ENCODE measurements at regions of chr11 and their contacts with region 1.

Region 1: GRCh38 chr11:62726915-62727763 is at the start of gene HNRNPUL2:
- H3K4me3 Mint-ChIP-seq: peak within 1 kb of the TSS; percentile 95
- H3K27ac Mint-ChIP-seq: peak within 1 kb of the TSS; percentile 97
- H3K4me1 Mint-ChIP-seq: peaks cover 46% of the 10 kb centered on the region
- H3K27me3 Mint-ChIP-seq: no peaks in the 10 kb centered on the region

Region 2: DNA sequence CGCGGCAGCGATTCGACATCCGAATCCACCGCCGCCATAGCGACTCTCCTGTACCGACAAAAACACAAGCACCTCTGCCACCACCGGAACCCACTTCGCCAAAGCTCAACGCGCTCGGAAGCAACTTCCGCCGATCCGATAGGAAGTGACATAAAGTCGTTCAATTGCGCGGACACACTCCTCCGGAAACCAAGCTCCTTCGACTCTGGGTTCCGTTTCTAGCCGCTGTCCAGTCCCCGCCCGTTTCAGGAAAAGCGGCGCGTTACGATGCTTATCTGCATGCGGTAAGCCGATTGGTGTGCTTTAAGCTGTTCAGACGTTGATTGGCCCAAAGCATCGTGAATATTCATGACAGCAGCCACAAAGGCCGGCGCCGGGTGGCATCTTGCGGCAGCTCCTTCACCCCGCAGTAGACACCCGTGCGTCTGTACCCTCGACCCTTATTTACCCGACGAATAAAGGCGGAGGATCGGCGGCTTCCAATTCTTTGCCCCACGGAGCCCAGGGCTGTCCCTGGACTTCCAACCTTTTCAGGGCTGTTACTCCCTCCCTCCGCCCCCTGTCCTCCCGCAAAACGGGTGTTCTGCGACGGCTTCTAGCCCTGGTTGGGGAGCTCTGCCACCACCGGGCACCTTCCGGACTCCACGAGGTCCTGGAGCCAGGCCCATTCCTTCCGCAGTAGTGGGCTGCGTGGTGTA is 135.5 kb before region 1 on chr11 and contains the start of gene TUT1:
- intact Hi-C with region 1: no loop called
- H3K4me3 Mint-ChIP-seq: peak within 1 kb of the TSS; percentile 91
- H3K27ac Mint-ChIP-seq: peak within 1 kb of the TSS; percentile 97
- H3K4me1 Mint-ChIP-seq: peaks cover 39% of the 10 kb centered on the region
- H3K27me3 Mint-ChIP-seq: no peaks in the 10 kb centered on the region

Region 3: GRCh38 chr11:62664405-62665074 is 62.6 kb before region 1 on chr11:
- intact Hi-C with region 1: no loop called
- H3K4me3 Mint-ChIP-seq: peak overlapping the region; percentile 94
- H3K27ac Mint-ChIP-seq: peak overlapping the region; percentile 88
- H3K4me1 Mint-ChIP-seq: peaks cover 29% of the 10 kb centered on the region
- H3K27me3 Mint-ChIP-seq: no peaks in the 10 kb centered on the region

Region 4: DNA sequence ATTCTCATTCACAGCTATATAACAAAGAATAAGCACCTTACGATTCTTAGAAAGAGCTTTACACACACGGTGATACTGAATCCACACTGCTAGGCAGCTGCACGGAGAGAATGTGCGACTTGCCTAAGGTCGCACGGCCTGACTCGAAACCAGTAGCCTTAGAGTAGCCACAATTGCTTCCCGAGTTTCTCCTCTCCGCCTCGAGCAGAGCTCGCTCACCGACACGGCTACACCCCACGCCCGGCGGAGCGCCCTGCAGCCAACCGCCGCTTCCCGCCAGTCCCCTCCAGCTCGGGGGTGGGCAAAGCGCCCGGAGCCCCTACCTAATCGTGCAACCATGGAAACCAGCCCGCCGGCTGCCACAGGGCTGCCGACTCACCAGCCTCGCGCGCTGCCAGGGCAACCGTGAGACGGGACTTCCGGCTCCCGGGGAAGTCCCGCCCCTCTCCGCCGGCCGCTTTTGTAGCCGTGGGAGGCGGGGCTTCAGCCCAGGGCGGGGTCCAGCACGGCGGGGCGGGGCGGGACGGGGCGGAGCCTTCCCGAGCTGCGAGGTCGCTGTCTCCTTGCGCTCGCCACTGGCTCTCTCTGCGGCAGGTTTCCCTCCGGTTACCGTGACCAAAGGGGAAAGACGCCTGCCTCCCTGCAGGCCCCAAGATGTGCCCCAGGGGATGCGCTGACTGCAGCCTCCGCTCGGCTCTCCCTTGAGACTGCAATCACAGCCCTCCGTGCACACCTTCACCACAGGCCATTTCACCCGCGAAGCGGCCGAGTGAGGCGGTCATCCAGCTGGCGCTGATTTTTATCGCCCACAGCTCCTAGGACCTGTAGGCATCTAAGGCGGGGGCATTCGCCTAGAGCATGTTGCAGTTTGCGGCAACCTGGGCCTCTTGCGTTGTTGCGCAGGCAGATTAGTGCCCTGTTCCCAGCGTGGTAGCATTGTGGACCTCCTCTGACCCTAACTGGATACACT is 21.0 kb before region 1 on chr11:
- intact Hi-C with region 1: loop called (anchors 1 kb)
- H3K4me3 Mint-ChIP-seq: peak overlapping the region; percentile 94
- H3K27ac Mint-ChIP-seq: peak overlapping the region; percentile 92
- H3K4me1 Mint-ChIP-seq: peaks cover 77% of the 10 kb centered on the region
- H3K27me3 Mint-ChIP-seq: no peaks in the 10 kb centered on the region

Region 5: DNA sequence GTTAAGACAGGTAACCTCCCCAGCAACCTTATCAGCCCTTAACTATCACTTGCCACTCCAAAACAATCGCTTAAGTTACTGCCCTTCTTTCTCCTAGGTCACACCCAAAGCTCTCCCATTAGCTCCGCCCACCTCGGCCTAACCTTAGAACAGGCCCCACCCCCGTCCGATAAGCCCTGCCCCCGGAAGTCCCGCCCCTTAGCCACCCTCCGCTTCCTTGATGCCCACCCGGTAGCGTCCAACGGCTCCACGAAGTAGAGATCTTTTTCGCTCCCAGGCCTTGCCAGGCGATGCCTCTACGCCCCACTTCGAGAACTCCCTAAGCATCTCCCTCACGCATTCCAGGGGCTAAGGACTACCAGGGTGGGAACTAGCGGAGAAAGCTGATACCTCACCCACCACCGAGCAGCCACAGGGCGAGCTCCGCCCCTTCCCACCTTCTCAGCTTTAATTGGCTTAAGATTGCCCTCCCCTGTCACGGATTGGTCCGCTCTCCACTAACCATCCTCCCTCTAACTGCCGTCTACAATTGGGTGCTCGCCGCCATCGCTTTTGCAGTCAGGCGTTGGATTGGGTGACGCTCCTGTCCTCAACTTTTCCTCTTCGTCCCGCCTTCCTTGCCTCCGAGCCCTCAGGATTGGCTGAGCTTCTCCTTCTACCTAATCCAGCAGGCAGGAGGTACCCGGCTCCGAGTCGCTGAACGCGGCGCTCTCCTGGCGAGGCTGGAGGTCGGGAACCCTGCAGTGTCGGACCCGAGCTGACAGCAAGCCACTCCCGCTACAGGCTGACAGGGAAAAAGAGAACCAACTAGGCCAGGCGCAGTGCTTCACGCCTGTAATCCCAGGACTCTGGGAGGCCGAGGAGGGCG is 26.8 kb after region 1 on chr11 and contains the start of gene ZBTB3:
- intact Hi-C with region 1: loop called (anchors 1 kb)
- H3K4me3 Mint-ChIP-seq: peak within 1 kb of the TSS; percentile 92
- H3K27ac Mint-ChIP-seq: peak within 1 kb of the TSS; percentile 98
- H3K4me1 Mint-ChIP-seq: peaks cover 34% of the 10 kb centered on the region
- H3K27me3 Mint-ChIP-seq: no peaks in the 10 kb centered on the region

Region 6: GRCh38 chr11:62771144-62772021 is 44.2 kb after region 1 on chr11 and contains the start of gene TAF6L:
- intact Hi-C with region 1: loop called (anchors 5 kb)
- H3K4me3 Mint-ChIP-seq: peak within 1 kb of the TSS; percentile 85
- H3K27ac Mint-ChIP-seq: peak within 1 kb of the TSS; percentile 96
- H3K4me1 Mint-ChIP-seq: peaks cover 45% of the 10 kb centered on the region
- H3K27me3 Mint-ChIP-seq: no peaks in the 10 kb centered on the region

Region 7: GRCh38 chr11:62860835-62861563 is 133.9 kb after region 1 on chr11:
- intact Hi-C with region 1: loop called (anchors 5 kb)
- H3K4me3 Mint-ChIP-seq: no peak overlapping the region
- H3K27ac Mint-ChIP-seq: no peak overlapping the region
- H3K4me1 Mint-ChIP-seq: peaks cover 40% of the 10 kb centered on the region
- H3K27me3 Mint-ChIP-seq: no peaks in the 10 kb centered on the region